GM18951 (cell line): ENCODE measurements at regions of chr10 and their contacts with region 1.

Region 1: GRCh38 chr10:74255888-74256357 is 104.9 kb downstream of the ADK start:
- POLR2A ChIP-seq: no peak

Region 2: DNA sequence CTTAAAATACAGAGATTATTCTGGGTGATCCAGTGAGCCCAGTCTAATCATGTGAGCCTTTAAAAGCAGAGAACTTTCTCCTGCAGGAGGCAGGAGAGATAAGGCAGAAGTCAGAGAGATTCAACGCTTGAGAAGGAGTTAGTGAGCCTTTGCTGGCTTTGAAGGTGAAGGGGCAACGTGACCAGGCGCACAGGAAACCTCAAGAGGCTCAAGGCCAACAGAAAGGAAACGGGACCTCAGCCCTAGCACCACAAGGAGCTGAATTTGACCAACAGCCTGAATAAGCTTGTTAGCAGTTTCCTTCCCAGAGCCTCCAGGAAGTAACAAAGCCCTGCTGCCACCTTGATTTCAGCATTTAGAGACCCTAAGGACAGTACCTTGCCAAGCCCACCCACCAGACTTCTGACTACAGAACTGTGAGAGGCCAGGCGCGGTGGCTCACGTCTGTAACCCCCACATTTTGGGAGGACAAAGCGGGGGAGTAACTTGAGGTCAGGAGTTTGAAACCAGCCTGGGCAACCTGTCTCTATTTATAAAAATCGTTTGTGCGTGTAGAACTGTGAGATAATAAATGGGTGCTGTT is 483.2 kb after region 1 on chr10:
- in situ Hi-C with region 1: loop called (anchors 25 kb)
- POLR2A ChIP-seq: no peak

Region 3: GRCh38 chr10:75235375-75236177 is 979.7 kb after region 1 on chr10 and contains the start of gene COMTD1:
- in situ Hi-C with region 1: loop called (anchors 25 kb)
- POLR2A ChIP-seq: peak; percentile 49